Right ventricle myocardium inferior (tissue), 1 donor: ENCODE measurements at regions of chr15 and their contacts with region 1.

Region 1: DNA sequence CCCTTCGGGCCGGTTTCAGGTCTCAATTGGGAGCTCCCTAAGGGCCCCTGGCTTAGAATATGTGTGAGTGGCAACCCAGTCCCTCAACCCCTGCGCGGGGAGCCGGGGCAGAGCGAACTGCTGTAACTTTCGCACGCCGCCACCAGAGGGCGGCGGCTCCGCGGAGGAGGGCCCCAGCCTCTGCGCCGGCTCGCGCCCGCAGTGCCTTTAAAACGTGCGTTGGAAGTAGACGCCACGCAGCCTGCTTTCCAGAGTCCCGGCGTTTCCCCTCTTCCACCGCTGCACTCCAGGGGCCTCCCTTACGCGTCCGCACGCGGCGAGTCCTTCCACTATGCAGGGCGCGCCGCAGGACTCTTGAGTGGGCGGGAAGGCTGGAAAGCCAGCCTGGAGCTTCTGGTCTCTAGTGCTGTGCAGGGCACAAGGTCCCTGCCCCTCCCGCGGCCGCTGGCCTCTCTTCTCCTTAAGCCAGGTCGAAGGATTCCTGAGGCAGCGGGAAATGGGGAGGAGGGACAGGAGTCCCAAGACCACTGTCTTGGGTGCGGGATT is 23.7 kb upstream of the RNU6-1 start:
- DNase-seq: peak; percentile 94
- ATAC-seq: peak; percentile 97

Region 2: DNA sequence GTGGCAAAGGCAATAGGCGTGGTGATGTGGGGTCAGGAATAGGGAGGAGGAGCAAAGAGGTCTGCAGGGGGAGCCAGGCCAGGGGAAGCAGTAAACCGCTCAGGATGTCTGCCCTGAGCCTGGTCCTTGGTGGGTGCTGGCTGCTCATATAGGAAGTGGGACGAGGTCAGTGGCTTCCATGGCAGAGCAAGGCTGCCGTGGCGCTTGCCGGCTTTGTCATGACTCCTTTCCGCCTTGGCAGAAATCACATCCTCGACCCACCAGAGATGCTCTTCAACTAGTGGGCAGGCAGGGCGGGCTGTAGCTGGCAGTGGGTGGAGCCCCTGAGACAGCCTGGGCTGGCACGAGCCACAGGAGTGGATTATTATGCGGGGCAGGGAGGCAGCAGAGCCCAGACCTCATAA is 51.3 kb before region 1 on chr15:
- intact Hi-C with region 1: no loop called
- DNase-seq: peak; percentile 43
- ATAC-seq: no peak

Region 3: GRCh38 chr15:67832031-67832551 is 31.4 kb before region 1 on chr15:
- intact Hi-C with region 1: no loop called
- DNase-seq: no peak
- ATAC-seq: no peak

Region 4: GRCh38 chr15:67967871-67968431 is 104.4 kb after region 1 on chr15:
- intact Hi-C with region 1: loop called (anchors 10 kb)
- DNase-seq: peak; percentile 89
- ATAC-seq: peak; percentile 91

Region 5: GRCh38 chr15:68053701-68054627 is 190.4 kb after region 1 on chr15 and contains the start of gene PIAS1:
- intact Hi-C with region 1: loop called (anchors 5 kb)
- DNase-seq: peak; percentile 99
- ATAC-seq: peak; percentile 99
- total RNA-seq, gene PIAS1: 26.1 TPM

Region 6: GRCh38 chr15:68154923-68155559 is 291.5 kb after region 1 on chr15:
- intact Hi-C with region 1: loop called (anchors 1 kb)
- DNase-seq: no peak
- ATAC-seq: peak; percentile 50

Region 7: DNA sequence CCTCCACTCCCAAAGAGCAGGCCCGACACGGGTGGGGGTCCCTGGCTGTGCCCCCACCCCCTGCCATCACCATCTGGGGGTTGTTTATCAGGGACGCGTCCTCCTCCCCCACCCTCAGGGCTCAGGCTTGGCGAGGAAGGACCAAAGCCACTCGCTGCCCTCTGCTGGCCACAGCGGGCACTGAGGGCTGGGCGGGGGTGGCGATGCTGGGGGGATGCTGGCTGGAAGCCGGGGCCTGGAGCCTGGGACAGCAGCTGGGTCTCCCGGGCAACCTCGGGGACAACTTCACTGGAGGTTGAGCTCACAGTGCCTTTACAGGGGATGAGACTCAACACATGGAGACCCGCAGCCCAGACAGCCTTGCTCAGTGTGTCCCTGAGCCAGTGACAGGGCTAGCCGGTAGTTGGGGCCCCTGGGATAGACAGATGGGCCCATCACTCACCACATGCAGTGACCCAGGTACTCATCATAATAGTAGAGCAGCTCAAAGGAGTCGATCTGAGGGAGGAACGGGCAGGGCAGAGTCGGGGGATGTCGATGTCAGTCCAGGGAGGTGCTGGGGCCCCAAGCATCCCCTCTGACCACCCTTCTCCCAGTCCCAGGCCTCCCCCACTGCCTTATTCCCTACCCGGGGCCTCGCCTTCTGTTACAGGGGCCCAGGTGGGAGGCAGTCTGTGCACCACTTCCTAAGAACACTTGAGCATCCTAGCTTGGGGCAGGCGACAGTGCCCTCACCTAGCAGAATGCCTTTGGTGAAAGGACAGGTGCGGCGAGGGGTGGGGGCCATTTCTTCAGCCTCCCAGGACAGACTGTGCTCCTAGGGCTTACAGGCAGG is 347.5 kb after region 1 on chr15:
- intact Hi-C with region 1: loop called (anchors 2 kb)
- DNase-seq: peak; percentile 89
- ATAC-seq: peak; percentile 45